GM12878 (cell line): ENCODE measurements at regions of chr19 and their contacts with region 1.

Region 1: GRCh38 chr19:34733826-34734600 is at the start of gene ZNF181:
- DNase-seq: peak; percentile 53
- ATAC-seq: peak; percentile 92
- H3K4me3 ChIP-seq: peak within 1 kb of the TSS; percentile 79
- H3K27ac ChIP-seq: peak within 1 kb of the TSS; percentile 89
- H3K4me1 ChIP-seq: no peaks in the 10 kb centered on the region
- H3K27me3 ChIP-seq: no peaks in the 10 kb centered on the region
- CTCF ChIP-seq: no peak
- EP300 ChIP-seq: no peak
- POLR2A ChIP-seq: peak; percentile 88
- RAD21 ChIP-seq: no peak
- polyA plus RNA-seq, gene ZNF181: 2.1 to 2.7 TPM

Region 2: GRCh38 chr19:34772697-34773554 is 38.9 kb after region 1 on chr19 and contains the start of gene ZNF599:
- CTCF ChIA-PET with region 1: no interaction called
- POLR2A ChIA-PET with region 1: no interaction called
- RAD21 ChIA-PET with region 1: no interaction called
- SMC1A ChIA-PET with region 1: interaction called, 5 read pairs
- in situ Hi-C with region 1: no loop called
- intact Hi-C with region 1: loop called (anchors 5 kb)
- DNase-seq: peak; percentile 68
- ATAC-seq: peak; percentile 100
- H3K4me3 ChIP-seq: peak within 1 kb of the TSS; percentile 66
- H3K27ac ChIP-seq: peak within 1 kb of the TSS; percentile 17
- H3K4me1 ChIP-seq: peaks cover 4% of the 10 kb centered on the region
- H3K27me3 ChIP-seq: no peaks in the 10 kb centered on the region
- CTCF ChIP-seq: no peak
- EP300 ChIP-seq: peak in 1 of 2 experiments; percentile 29; a peak in 1 of 4 replicates
- POLR2A ChIP-seq: peak; percentile 81
- RAD21 ChIP-seq: no peak
- polyA plus RNA-seq, gene ZNF599: 0.27 to 1.1 TPM